RWPE1 (cell line): ENCODE measurements at regions of chr15 and their contacts with region 1.

Region 1: DNA sequence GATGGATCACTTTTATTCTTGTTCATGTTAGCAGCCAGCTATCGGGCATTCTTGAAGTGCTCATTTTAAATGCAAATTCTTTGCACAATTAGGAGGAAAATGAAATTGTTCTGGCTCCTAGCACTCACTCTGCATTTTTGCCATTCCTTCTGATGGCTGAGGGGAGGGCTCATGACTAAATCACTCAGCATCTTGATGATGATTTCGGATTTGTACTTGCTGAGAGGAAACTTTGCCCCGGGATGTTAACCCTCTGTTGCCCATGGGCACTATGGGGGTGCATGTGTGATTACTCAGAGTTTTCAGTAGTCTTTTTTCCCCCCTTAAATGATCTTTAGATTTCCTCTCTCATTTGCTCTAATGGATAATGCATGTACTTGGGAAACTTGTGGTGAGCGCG is 299.6 kb upstream of the C2CD4B start:
- DNase-seq: no peak
- H3K27ac ChIP-seq: no peak overlapping the region
- CTCF ChIP-seq: no peak

Region 2: DNA sequence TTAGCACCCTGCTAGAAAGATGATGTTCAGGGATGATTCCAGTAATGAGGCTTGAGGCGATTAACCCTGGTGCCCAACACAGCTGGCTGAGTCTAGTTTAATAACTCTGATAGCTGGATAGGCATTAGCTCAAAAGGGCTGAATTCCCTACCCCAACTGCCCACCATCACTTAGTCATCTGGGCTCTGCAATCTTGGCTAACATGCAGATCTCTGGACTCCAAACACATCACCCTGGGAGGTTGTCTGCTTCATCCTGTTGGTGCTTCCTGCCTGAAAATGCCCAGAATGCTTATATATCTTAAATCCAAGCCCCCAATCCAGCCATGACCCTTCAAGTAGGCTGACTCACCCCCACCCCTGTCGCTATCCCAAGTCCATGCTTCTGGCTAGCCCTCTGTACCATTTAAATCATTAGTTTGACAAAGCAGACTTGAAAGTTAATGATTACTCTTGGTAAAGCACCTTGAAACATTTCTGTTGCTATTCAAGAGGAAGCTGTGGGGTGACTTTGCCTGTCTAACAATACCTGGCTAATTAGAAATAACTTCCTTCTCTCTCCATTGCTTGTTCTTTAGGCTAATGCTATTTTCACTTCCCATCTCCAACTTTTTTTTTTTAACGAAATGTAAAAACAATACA is 1128.6 kb before region 1 on chr15:
- CTCF ChIA-PET with region 1: interaction called, 11 read pairs
- POLR2A ChIA-PET with region 1: no interaction called
- DNase-seq: no peak
- H3K27ac ChIP-seq: no peak overlapping the region
- CTCF ChIP-seq: no peak